Adrenal gland (tissue), 19 donors: ENCODE measurements at regions of chr3 and their contacts with region 1.

Region 1: DNA sequence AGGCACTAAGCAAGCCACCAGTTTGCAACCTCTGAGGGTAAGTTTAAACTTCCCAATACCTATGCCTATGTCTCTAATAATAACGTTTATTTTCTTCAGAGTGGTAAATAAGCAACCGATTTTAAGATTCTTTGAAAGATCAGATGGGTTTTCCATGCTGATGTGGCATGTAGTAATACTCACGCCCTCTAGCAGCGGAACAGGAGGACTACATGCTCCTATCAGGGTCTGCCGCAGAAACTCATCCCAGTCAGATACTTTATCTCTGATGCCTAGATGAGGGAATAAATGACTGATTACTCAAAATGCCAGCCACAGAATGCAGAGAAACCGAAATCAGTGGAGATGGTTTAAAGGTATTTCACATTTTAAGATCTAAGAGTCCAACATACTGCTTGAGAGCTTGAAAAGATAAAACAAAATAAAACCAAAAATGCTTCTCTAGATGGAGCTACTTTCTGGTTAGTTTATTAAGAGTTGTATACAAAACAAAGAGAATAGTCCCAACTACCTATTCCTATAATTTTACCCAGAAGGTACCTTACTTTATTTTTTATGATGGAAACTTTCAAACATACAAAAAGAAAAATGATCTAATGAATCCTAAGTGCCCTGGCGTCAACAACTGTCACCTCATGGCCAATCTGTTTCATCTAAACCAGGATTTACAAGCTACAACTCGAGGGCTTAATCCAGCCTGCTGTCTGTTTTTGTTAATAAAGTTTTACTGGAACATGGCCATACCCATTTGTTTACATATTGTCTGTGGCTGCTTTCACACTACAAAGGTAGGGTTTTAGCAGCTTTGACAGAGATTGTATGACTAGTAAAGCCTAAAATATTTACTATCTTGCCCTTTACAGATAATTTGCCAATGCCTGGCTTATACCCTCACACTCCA is 37.5 kb upstream of the STIMATE start:
- DNase-seq: peak; percentile 31 to 80 (median 60)
- H3K4me3 ChIP-seq: no peak overlapping the region
- H3K27ac ChIP-seq: no peak overlapping the region
- H3K4me1 ChIP-seq: peaks cover 0 to 7% of the 10 kb centered on the region in 2 donors
- H3K27me3 ChIP-seq: no peaks in the 10 kb centered on the region
- CTCF ChIP-seq: peak; percentile 65 to 80 (median 75)
- POLR2A ChIP-seq: no peak

Region 2: GRCh38 chr3:52845691-52846431 is 89.0 kb before region 1 on chr3:
- intact Hi-C with region 1: loop called (anchors 5 to 10 kb)
- DNase-seq: no peak
- H3K4me3 ChIP-seq: no peak overlapping the region
- H3K27ac ChIP-seq: peak overlapping the region in 2 of 5 donors; percentile 62 to 69
- H3K4me1 ChIP-seq: peaks cover 5 to 30% of the 10 kb centered on the region in 2 donors
- H3K27me3 ChIP-seq: no peaks in the 10 kb centered on the region
- CTCF ChIP-seq: peak in 1 of 6 experiments; percentile 40
- POLR2A ChIP-seq: no peak

Region 3: GRCh38 chr3:52851348-52851747 is 83.5 kb before region 1 on chr3:
- intact Hi-C with region 1: loop called (anchors 5 to 10 kb)
- DNase-seq: peak in 6 of 7 donors; percentile 57 to 76 (median 60)
- H3K4me3 ChIP-seq: no peak overlapping the region
- H3K27ac ChIP-seq: no peak overlapping the region
- H3K4me1 ChIP-seq: peaks cover 0 to 12% of the 10 kb centered on the region in 2 donors
- H3K27me3 ChIP-seq: no peaks in the 10 kb centered on the region
- CTCF ChIP-seq: peak; percentile 42 to 91 (median 82)
- POLR2A ChIP-seq: no peak